Activated CD8-positive, alpha-beta T cell treated with anti-CD3 and anti-CD28 coated beads for 36 hours (primary cell): ENCODE measurements at regions of chr12 and their contacts with region 1.

Region 1: DNA sequence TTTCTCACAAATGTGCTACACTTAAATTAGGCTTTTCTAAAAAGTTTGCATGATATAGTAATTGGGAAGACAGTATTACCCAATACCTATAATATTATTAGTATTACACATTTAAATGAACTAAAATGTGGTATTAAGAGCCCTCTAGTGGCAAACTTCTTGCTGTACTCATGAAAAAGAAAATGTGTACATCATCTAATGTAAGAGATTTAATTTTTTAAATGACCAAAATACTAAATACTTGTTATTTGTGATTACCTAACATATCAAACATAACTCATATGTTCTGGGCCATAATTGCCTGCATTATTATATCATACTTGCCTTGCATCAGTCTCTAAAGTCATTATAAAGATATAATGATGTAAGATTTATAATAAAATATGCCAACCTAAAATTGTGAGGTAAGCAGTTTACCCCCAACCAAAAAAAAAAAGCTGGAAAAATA is 64.2 kb downstream of the DNAI7 start:
- DNase-seq: no peak
- ATAC-seq: no peak
- H3K4me3 Mint-ChIP-seq: no peak overlapping the region
- H3K27ac Mint-ChIP-seq: no peak overlapping the region
- H3K4me1 Mint-ChIP-seq: no peaks in the 10 kb centered on the region
- H3K27me3 Mint-ChIP-seq: no peaks in the 10 kb centered on the region
- CTCF ChIP-seq: peak; percentile 66

Region 2: GRCh38 chr12:24997970-24998582 is 132.7 kb before region 1 on chr12:
- CTCF ChIA-PET with region 1: interaction called, 52 read pairs
- POLR2A ChIA-PET with region 1: no interaction called
- intact Hi-C with region 1: no loop called
- DNase-seq: no peak
- ATAC-seq: peak; percentile 87
- H3K4me3 Mint-ChIP-seq: no peak overlapping the region
- H3K27ac Mint-ChIP-seq: peak overlapping the region; percentile 17
- H3K4me1 Mint-ChIP-seq: peaks cover 16% of the 10 kb centered on the region
- H3K27me3 Mint-ChIP-seq: no peaks in the 10 kb centered on the region
- CTCF ChIP-seq: no peak

Region 3: GRCh38 chr12:25110260-25110659 is 20.5 kb before region 1 on chr12:
- CTCF ChIA-PET with region 1: no interaction called
- POLR2A ChIA-PET with region 1: no interaction called
- intact Hi-C with region 1: no loop called
- DNase-seq: no peak
- ATAC-seq: no peak
- H3K4me3 Mint-ChIP-seq: no peak overlapping the region
- H3K27ac Mint-ChIP-seq: no peak overlapping the region
- H3K4me1 Mint-ChIP-seq: peaks cover 3% of the 10 kb centered on the region
- H3K27me3 Mint-ChIP-seq: no peaks in the 10 kb centered on the region
- CTCF ChIP-seq: no peak

Region 4: DNA sequence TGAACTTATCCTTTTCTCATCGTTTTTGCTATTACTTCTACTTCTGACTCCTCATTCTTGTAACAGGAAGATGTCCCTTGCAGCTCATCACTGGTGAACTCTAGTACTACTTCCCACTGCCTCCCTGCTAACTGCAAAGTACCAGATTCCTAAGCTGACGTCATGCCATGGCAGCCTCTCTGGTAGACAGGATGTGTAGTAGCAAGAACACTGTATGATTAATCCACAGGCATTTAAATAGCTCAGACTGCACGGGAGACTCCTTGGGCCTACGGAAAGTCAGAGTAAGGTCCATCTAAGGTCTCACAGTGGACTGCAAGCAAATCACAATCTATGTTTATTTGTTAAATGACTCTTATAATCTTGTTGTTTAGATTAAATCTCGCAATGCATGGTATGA is 20.7 kb after region 1 on chr12:
- CTCF ChIA-PET with region 1: interaction called, 12 read pairs
- POLR2A ChIA-PET with region 1: interaction called, 3 read pairs
- intact Hi-C with region 1: no loop called
- DNase-seq: no peak
- ATAC-seq: no peak
- H3K4me3 Mint-ChIP-seq: no peak overlapping the region
- H3K27ac Mint-ChIP-seq: no peak overlapping the region
- H3K4me1 Mint-ChIP-seq: peaks cover 5% of the 10 kb centered on the region
- H3K27me3 Mint-ChIP-seq: no peaks in the 10 kb centered on the region
- CTCF ChIP-seq: no peak

Region 5: GRCh38 chr12:25250744-25251730 is 120.3 kb after region 1 on chr12 and contains the start of gene KRAS:
- CTCF ChIA-PET with region 1: no interaction called
- POLR2A ChIA-PET with region 1: no interaction called
- intact Hi-C with region 1: no loop called
- DNase-seq: peak; percentile 94
- ATAC-seq: peak; percentile 92
- H3K4me3 Mint-ChIP-seq: peak within 1 kb of the TSS; percentile 94
- H3K27ac Mint-ChIP-seq: peak within 1 kb of the TSS; percentile 94
- H3K4me1 Mint-ChIP-seq: peaks cover 32% of the 10 kb centered on the region
- H3K27me3 Mint-ChIP-seq: no peaks in the 10 kb centered on the region
- CTCF ChIP-seq: no peak
- total RNA-seq, gene KRAS: 17.0 to 19.0 TPM